ENCODE measurements at regions of chr3 and their contacts with region 1.

Region 1: DNA sequence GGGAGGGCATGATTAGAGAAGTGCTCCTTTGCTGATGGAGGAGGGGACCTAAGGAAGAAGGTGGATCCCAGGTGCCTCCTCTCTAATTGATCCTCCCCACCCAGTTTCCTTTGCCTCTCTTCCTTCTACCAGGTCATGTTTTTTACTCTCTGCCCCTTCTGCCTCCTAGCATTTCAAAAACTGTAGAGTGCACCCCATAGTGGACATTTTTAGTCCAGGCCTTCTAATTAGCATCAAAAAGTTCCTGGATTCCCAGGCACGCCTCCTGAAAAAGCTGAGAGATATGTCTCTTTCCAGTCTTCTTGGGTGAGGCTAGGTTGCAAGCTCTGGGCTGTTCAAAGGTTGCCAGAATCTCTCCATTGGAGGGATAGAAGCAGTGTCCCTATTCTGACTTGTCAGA is 18.7 kb upstream of the ITGB5 start:
- DNase-seq: no peak
- H3K4me3 ChIP-seq: no peak overlapping the region
- H3K27ac ChIP-seq: no peak overlapping the region
- H3K27me3 ChIP-seq: peaks cover 23% of the 10 kb centered on the region
- CTCF ChIP-seq: no peak; the same call in 1 of the 2 replicates

Region 2: GRCh38 chr3:124761250-124761796 is 144.5 kb before region 1 on chr3:
- CTCF ChIA-PET with region 1: interaction called, 177 read pairs
- POLR2A ChIA-PET with region 1: no interaction called
- DNase-seq: peak; percentile 77
- H3K4me3 ChIP-seq: no peak overlapping the region
- H3K27ac ChIP-seq: no peak overlapping the region
- H3K27me3 ChIP-seq: no peaks in the 10 kb centered on the region
- CTCF ChIP-seq: peak; percentile 98

Region 3: GRCh38 chr3:124780761-124781475 is 124.9 kb before region 1 on chr3:
- CTCF ChIA-PET with region 1: interaction called, 97 read pairs
- POLR2A ChIA-PET with region 1: interaction called, 3 read pairs
- DNase-seq: no peak
- H3K4me3 ChIP-seq: no peak overlapping the region
- H3K27ac ChIP-seq: peak overlapping the region; percentile 80
- H3K27me3 ChIP-seq: no peaks in the 10 kb centered on the region
- CTCF ChIP-seq: no peak

Region 4: DNA sequence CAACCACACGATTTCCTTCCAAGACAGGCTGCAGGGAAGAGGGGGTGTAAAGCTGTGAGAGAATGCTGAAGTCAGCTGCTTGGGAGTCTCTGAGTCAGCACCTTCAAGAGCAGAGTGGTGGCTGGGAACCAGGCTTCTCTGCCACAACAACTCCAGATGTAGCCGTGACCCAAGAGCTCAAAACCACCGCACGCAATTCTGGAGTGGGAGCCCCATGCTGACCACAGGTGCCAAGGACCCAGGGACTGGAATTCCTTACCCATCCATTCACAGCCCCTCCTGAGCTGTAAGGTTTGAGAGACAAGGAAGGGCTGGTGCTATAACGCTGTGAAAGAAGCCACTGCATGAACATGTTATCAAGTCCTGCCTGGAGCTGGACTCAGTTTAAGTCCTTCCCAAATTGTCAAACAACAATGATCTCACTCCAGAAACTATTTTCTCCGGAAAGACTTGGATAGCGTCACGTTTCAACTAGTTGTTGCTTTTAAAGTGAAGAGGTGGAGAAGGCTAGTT is 114.2 kb before region 1 on chr3:
- CTCF ChIA-PET with region 1: interaction called, 97 read pairs
- POLR2A ChIA-PET with region 1: no interaction called
- DNase-seq: peak; percentile 91
- H3K4me3 ChIP-seq: no peak overlapping the region
- H3K27ac ChIP-seq: peak overlapping the region; percentile 87
- H3K27me3 ChIP-seq: no peaks in the 10 kb centered on the region
- CTCF ChIP-seq: no peak

Region 5: DNA sequence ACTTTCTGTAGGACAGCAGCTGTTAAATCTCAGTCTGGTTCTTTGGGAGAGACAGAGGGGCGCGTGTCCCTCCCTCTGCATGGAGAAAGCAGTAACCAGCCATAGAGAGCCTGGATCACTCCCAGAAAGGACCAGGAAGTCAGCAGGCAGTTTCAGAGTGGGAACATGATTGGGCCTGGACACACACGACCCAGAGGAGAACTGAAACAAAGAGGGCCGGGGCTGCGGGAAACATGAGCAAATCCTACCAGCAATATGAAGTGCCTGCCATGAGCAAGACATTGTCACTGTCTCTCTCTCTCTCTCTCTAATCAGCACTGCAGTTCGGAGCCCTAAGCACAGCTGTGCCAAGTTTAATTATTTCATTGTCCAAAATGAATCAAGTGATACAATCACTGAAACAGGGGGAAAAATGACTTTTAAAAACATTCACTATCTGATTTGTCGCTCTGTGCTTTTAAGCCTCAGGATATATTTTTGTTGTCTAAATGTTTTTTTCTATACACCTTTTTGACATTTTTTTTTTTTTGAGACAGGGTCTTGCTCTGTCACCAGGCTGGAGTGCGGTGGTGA is 11.1 kb after region 1 on chr3:
- CTCF ChIA-PET with region 1: interaction called, 15 read pairs
- POLR2A ChIA-PET with region 1: no interaction called
- DNase-seq: no peak
- H3K4me3 ChIP-seq: no peak overlapping the region
- H3K27ac ChIP-seq: no peak overlapping the region
- H3K27me3 ChIP-seq: peaks cover 14% of the 10 kb centered on the region
- CTCF ChIP-seq: no peak

Measured in AG04450 (cell line).